SK-N-SH (cell line): ENCODE measurements at regions of chr12 and their contacts with region 1.

Region 1: GRCh38 chr12:3202734-3203446 is 125.7 kb downstream of the TSPAN9 start:
- DNase-seq: peak; percentile 83
- H3K4me3 ChIP-seq: no peak overlapping the region; a peak in 1 of 4 replicates
- H3K27ac ChIP-seq: no peak overlapping the region
- H3K4me1 ChIP-seq: peaks cover 6 to 55% of the 10 kb centered on the region in 2 experiments; a peak in 3 of 4 replicates
- H3K27me3 ChIP-seq: no peaks in the 10 kb centered on the region
- CTCF ChIP-seq: peak; percentile 98
- EP300 ChIP-seq: no peak
- RAD21 ChIP-seq: peak; percentile 58

Region 2: GRCh38 chr12:3073438-3074250 is 129.2 kb before region 1 on chr12:
- CTCF ChIA-PET with region 1: interaction called, 30 read pairs
- POLR2A ChIA-PET with region 1: no interaction called
- DNase-seq: peak; percentile 90
- H3K4me3 ChIP-seq: no peak overlapping the region; a peak in 1 of 4 replicates
- H3K27ac ChIP-seq: no peak overlapping the region
- H3K4me1 ChIP-seq: peaks cover 0 to 14% of the 10 kb centered on the region in 2 experiments; a peak in 2 of 4 replicates
- H3K27me3 ChIP-seq: no peaks in the 10 kb centered on the region
- CTCF ChIP-seq: peak; percentile 99
- EP300 ChIP-seq: no peak
- RAD21 ChIP-seq: peak; percentile 94

Region 3: GRCh38 chr12:3145033-3145432 is 57.9 kb before region 1 on chr12:
- CTCF ChIA-PET with region 1: interaction called, 17 read pairs
- POLR2A ChIA-PET with region 1: no interaction called
- DNase-seq: peak; percentile 10
- H3K4me3 ChIP-seq: no peak overlapping the region
- H3K27ac ChIP-seq: no peak overlapping the region
- H3K4me1 ChIP-seq: peaks cover 0 to 14% of the 10 kb centered on the region in 2 experiments; a peak in 1 of 4 replicates
- H3K27me3 ChIP-seq: no peaks in the 10 kb centered on the region
- CTCF ChIP-seq: no peak
- EP300 ChIP-seq: no peak
- RAD21 ChIP-seq: no peak

Region 4: DNA sequence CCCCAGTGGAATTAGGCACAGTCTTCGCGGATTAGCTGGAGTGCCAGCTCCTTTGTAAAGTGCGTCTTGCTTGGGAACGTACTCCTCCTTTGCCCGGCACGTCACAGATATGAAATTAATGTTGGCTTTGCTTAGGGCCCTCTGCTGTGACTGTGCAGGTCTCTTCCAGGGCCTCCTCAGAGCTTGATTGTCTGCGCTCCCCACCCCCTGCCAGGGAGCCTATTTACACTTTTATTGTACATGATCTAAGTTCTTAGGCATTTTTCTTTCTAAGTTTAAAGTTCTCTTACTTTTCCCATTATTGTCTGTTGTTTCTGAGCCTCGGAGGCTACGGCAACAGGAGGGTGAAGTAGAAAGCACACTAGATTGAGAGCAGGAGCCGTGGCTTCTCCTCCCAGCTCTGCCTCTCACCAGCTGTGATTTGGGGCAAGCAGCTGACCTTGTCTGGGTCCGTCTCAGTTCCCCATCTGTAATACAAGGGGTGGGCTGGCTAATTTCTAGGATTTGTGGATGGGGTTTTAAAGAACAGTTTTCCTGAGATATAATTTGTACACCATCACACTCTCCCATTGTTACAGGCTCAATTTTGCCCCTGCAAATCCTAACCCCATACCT is 43.9 kb before region 1 on chr12:
- CTCF ChIA-PET with region 1: interaction called, 24 read pairs
- POLR2A ChIA-PET with region 1: no interaction called
- DNase-seq: no peak
- H3K4me3 ChIP-seq: no peak overlapping the region
- H3K27ac ChIP-seq: peak overlapping the region in 1 of 2 experiments; percentile 7; a peak in 1 of 4 replicates
- H3K4me1 ChIP-seq: peaks cover 0 to 16% of the 10 kb centered on the region in 2 experiments; a peak in 2 of 4 replicates
- H3K27me3 ChIP-seq: no peaks in the 10 kb centered on the region
- CTCF ChIP-seq: no peak
- EP300 ChIP-seq: no peak
- RAD21 ChIP-seq: no peak

Region 5: GRCh38 chr12:3177778-3178425 is 25.0 kb before region 1 on chr12:
- CTCF ChIA-PET with region 1: interaction called, 27 read pairs
- POLR2A ChIA-PET with region 1: no interaction called
- DNase-seq: no peak
- H3K4me3 ChIP-seq: no peak overlapping the region
- H3K27ac ChIP-seq: no peak overlapping the region
- H3K4me1 ChIP-seq: peaks cover 0 to 4% of the 10 kb centered on the region in 2 experiments; a peak in 1 of 4 replicates
- H3K27me3 ChIP-seq: no peaks in the 10 kb centered on the region
- CTCF ChIP-seq: no peak
- EP300 ChIP-seq: no peak
- RAD21 ChIP-seq: no peak

Region 6: GRCh38 chr12:3218228-3219171 is 15.6 kb after region 1 on chr12:
- CTCF ChIA-PET with region 1: interaction called, 56 read pairs
- POLR2A ChIA-PET with region 1: interaction called, 4 read pairs
- DNase-seq: peak; percentile 87
- H3K4me3 ChIP-seq: no peak overlapping the region
- H3K27ac ChIP-seq: peak overlapping the region; percentile 75 to 86
- H3K4me1 ChIP-seq: peaks cover 31 to 62% of the 10 kb centered on the region in 2 experiments
- H3K27me3 ChIP-seq: no peaks in the 10 kb centered on the region
- CTCF ChIP-seq: no peak
- EP300 ChIP-seq: peak in 1 of 2 experiments; percentile 52; a peak in 2 of 4 replicates
- RAD21 ChIP-seq: no peak

Region 7: GRCh38 chr12:3267486-3268062 is 64.7 kb after region 1 on chr12:
- CTCF ChIA-PET with region 1: interaction called, 70 read pairs
- POLR2A ChIA-PET with region 1: no interaction called
- DNase-seq: no peak
- H3K4me3 ChIP-seq: no peak overlapping the region
- H3K27ac ChIP-seq: no peak overlapping the region
- H3K4me1 ChIP-seq: peaks cover 0 to 21% of the 10 kb centered on the region in 2 experiments; a peak in 2 of 4 replicates
- H3K27me3 ChIP-seq: no peaks in the 10 kb centered on the region
- CTCF ChIP-seq: no peak
- EP300 ChIP-seq: no peak
- RAD21 ChIP-seq: no peak

Region 8: GRCh38 chr12:3604748-3605586 is 402.1 kb after region 1 on chr12:
- CTCF ChIA-PET with region 1: no interaction called
- POLR2A ChIA-PET with region 1: no interaction called
- DNase-seq: peak; percentile 79
- H3K4me3 ChIP-seq: no peak overlapping the region
- H3K27ac ChIP-seq: peak overlapping the region in 1 of 2 experiments; percentile 94; a peak in 2 of 4 replicates
- H3K4me1 ChIP-seq: peaks cover 0 to 45% of the 10 kb centered on the region in 2 experiments; a peak in 2 of 4 replicates
- H3K27me3 ChIP-seq: peaks cover 21% of the 10 kb centered on the region
- CTCF ChIP-seq: no peak
- EP300 ChIP-seq: no peak
- RAD21 ChIP-seq: no peak